ENCODE measurements at regions of chr12 and their contacts with region 1.

Region 1: DNA sequence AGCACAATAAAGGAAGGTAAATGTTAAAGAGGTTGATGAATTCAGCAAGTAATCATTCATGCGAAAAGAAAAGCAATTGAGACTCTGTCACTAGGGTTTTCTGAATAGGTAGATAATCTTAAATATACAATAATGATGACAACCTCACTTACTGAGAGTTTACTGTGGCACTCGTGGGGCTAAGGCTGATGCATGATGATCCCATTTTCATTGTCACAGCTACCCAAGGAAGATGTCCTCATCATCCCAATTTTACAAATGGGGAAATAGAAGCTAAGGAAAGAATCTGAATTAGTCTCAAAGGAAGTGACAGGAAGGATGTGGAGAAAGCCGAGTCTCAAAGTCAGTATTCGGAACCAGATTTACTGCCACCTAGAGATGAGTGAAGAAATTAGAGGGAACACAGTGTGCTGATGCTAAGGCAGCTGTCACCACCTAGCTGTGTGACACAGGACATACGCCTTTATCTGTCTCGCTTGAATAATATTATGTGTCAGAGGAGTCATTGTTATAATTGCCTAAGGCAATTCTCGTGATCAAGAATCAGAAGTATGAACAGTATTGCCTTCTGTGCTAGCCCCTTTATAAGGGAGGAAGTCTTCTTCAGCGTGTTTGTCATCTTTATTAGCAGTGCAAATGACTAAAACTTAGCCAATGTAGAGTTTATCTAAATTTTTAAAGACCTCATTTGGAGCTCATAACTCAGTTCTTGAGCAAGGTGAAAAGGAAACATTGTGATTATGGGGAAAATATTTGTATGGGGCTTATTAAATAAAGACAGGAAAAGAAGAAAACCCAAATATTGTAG is 63.2 kb downstream of the ERGIC2 start:
- DNase-seq: peak; percentile 44 to 79
- H3K4me3 ChIP-seq: no peak overlapping the region
- H3K27ac ChIP-seq: no peak overlapping the region
- H3K4me1 ChIP-seq: peaks cover 8% of the 10 kb centered on the region; the same call in 1 of the 2 replicates
- H3K27me3 ChIP-seq: no peaks in the 10 kb centered on the region
- CTCF ChIP-seq: peak; percentile 87

Region 2: DNA sequence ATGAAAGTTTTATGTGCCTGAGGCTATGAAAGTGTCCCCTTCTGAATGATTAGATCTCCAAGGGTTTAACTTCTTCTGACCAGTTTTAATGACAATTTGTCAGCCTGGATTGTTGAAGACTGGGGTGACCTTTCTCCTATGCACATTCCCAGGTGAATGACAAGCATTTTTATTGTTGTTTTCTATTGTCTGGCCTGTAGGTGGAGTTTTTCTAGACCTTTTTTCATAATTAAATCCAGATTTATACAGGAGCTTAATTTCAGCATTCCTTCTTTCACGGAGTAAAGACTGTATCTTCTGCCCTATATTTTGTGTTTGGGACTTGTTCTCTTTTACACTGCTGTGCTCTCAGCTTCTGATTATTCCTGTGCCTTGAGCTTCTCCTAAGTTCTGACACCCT is 293.6 kb before region 1 on chr12:
- CTCF ChIA-PET with region 1: no interaction called
- POLR2A ChIA-PET with region 1: no interaction called
- intact Hi-C with region 1: loop called (anchors 5 kb)
- DNase-seq: no peak
- H3K4me3 ChIP-seq: no peak overlapping the region
- H3K27ac ChIP-seq: no peak overlapping the region
- H3K4me1 ChIP-seq: no peaks in the 10 kb centered on the region
- H3K27me3 ChIP-seq: no peaks in the 10 kb centered on the region
- CTCF ChIP-seq: peak; percentile 42; the same call in 1 of the 2 replicates

Region 3: GRCh38 chr12:29073628-29074239 is 244.0 kb before region 1 on chr12:
- CTCF ChIA-PET with region 1: interaction called, 14 read pairs
- POLR2A ChIA-PET with region 1: no interaction called
- intact Hi-C with region 1: loop called (anchors 1 kb)
- DNase-seq: peak; percentile 15 to 42
- H3K4me3 ChIP-seq: no peak overlapping the region
- H3K27ac ChIP-seq: no peak overlapping the region
- H3K4me1 ChIP-seq: no peaks in the 10 kb centered on the region
- H3K27me3 ChIP-seq: no peaks in the 10 kb centered on the region
- CTCF ChIP-seq: peak; percentile 86

Region 4: DNA sequence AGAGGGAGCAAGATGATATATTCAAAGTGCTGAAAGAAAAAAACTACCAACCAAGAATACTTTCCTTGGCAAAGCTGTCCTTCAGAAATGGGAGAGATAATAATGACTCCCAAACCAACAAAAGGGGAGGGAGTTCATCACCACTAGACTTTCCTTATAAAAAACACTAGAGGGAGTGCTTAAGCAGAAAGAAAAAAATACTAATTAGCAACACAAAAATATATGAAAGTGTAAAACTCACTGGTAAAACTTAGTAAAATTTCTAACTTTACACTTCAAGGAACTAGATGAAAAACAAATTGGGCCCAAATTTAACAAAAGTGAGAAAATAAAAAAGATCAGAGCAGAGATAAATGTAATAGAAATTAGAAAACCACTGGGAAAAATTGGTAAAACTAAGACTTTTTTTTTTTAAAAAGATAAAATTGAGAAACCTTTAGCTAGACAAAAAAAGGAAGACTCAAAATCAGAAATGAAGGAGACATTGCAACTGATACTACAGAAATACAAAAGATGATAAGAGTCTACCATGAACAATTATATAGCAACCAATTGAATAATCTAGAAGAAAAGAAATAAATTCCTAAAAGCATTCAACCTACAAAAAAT is 229.0 kb before region 1 on chr12:
- CTCF ChIA-PET with region 1: interaction called, 3 read pairs
- POLR2A ChIA-PET with region 1: no interaction called
- intact Hi-C with region 1: loop called (anchors 1 kb)
- DNase-seq: peak in 1 of 2 experiments; percentile 35
- H3K4me3 ChIP-seq: no peak overlapping the region
- H3K27ac ChIP-seq: no peak overlapping the region
- H3K4me1 ChIP-seq: no peaks in the 10 kb centered on the region
- H3K27me3 ChIP-seq: no peaks in the 10 kb centered on the region
- CTCF ChIP-seq: peak; percentile 78

Region 5: GRCh38 chr12:29110506-29111442 is 207.0 kb before region 1 on chr12:
- CTCF ChIA-PET with region 1: no interaction called
- POLR2A ChIA-PET with region 1: no interaction called
- intact Hi-C with region 1: no loop called
- DNase-seq: no peak
- H3K4me3 ChIP-seq: no peak overlapping the region
- H3K27ac ChIP-seq: no peak overlapping the region
- H3K4me1 ChIP-seq: peaks cover 17% of the 10 kb centered on the region
- H3K27me3 ChIP-seq: no peaks in the 10 kb centered on the region
- CTCF ChIP-seq: no peak

Measured in PC-9 (cell line).